Caco-2 (cell line): ENCODE measurements at regions of chr7 and their contacts with region 1.

Region 1: DNA sequence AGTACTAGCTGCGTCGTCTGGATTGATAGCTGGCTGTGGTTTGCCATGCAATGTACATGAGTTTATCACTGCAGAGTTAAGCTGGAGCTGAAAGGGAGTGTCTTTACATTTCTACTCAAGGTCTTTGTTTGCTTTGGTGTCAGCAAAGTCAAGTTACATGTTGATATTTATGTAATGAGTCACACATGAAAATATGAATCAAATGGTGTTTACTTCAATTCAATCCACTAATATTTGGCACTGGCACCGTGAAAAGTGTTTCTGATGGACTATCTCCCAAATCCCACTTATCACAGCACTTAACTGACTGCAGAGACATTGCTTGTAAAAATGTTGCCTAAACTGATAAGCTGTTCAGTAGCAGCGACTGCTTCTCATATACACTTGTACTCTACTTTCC is 395.9 kb downstream of the TFEC start:
- DNase-seq: peak; percentile 23 to 40
- H3K4me3 ChIP-seq: no peak overlapping the region
- H3K4me3 Mint-ChIP-seq: peak overlapping the region; percentile 5
- H3K27ac Mint-ChIP-seq: no peak overlapping the region
- H3K4me1 ChIP-seq: peaks cover 26% of the 10 kb centered on the region
- H3K4me1 Mint-ChIP-seq: peaks cover 27% of the 10 kb centered on the region
- H3K27me3 ChIP-seq: no peaks in the 10 kb centered on the region
- H3K27me3 Mint-ChIP-seq: no peaks in the 10 kb centered on the region
- CTCF ChIP-seq: no peak

Region 2: DNA sequence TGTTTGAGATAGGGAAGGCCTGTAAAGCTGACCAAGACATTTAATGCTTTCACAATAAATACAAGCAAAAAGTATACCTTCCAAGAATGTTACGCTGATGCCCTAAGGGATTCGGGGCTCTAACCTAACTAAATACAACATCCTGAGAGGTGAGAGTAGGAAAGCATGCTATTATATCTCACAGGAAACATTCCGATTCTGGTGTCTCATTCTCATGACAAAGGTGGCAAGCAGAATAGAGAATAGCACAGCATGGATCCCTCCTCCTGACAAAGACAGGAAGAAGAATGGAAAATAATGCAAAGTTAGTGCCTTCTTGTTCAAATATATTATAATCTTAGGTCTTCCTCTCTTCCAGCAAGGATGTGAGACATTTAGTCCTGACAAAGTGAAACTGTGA is 108.4 kb before region 1 on chr7:
- CTCF ChIA-PET with region 1: no interaction called
- POLR2A ChIA-PET with region 1: no interaction called
- intact Hi-C with region 1: no loop called
- DNase-seq: no peak
- H3K4me3 ChIP-seq: no peak overlapping the region
- H3K4me3 Mint-ChIP-seq: no peak overlapping the region
- H3K27ac Mint-ChIP-seq: no peak overlapping the region
- H3K4me1 ChIP-seq: no peaks in the 10 kb centered on the region
- H3K4me1 Mint-ChIP-seq: no peaks in the 10 kb centered on the region
- H3K27me3 ChIP-seq: no peaks in the 10 kb centered on the region; the same call in 1 of the 2 replicates
- H3K27me3 Mint-ChIP-seq: peaks cover 2% of the 10 kb centered on the region
- CTCF ChIP-seq: no peak

Region 3: DNA sequence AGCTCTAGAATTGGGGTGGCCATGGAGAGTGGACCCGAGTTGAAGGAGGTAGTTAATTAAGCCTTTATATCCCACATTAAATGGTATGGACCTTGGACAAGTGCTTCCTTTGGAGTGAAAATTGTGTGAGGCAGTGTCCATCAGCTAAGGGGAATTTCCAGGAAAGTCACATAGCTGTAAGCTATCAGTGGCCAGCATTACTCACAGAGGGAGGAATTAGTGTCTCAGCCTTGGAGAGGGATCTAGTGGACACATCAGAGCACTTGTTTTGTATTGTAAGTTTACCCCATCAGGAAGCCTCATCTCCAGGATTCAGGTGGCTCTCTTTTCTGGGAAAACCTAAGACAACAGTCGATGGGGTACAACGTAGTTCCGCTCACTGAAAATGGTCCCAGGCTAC is 20.8 kb before region 1 on chr7:
- CTCF ChIA-PET with region 1: no interaction called
- POLR2A ChIA-PET with region 1: no interaction called
- intact Hi-C with region 1: loop called (anchors 2 kb)
- DNase-seq: no peak
- H3K4me3 ChIP-seq: no peak overlapping the region
- H3K4me3 Mint-ChIP-seq: no peak overlapping the region
- H3K27ac Mint-ChIP-seq: no peak overlapping the region
- H3K4me1 ChIP-seq: no peaks in the 10 kb centered on the region
- H3K4me1 Mint-ChIP-seq: peaks cover 7% of the 10 kb centered on the region
- H3K27me3 ChIP-seq: no peaks in the 10 kb centered on the region
- H3K27me3 Mint-ChIP-seq: no peaks in the 10 kb centered on the region
- CTCF ChIP-seq: no peak

Region 4: DNA sequence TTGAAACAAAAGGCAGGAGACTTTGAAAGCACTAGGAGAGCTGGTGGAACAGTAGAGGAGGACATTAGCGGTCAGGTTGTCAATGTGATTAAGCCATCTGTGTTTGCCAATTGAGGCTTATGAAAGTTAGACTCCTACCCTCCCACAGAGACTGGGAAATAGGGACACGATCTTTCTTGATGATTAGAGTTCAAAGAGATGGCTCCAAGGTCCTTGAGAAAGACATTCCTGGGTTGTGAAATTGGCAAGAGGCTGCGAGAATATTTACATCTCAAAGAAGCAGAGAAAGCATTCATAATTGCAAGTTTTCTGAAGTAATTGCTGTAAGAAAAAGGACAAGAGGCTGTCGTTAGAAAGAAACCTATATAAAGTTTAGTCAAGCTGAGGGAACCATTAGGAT is 14.6 kb before region 1 on chr7:
- CTCF ChIA-PET with region 1: interaction called, 3 read pairs
- POLR2A ChIA-PET with region 1: no interaction called
- intact Hi-C with region 1: loop called (anchors 1 kb)
- DNase-seq: peak in 1 of 2 experiments; percentile 11
- H3K4me3 ChIP-seq: no peak overlapping the region
- H3K4me3 Mint-ChIP-seq: no peak overlapping the region
- H3K27ac Mint-ChIP-seq: no peak overlapping the region
- H3K4me1 ChIP-seq: peaks cover 24% of the 10 kb centered on the region
- H3K4me1 Mint-ChIP-seq: peaks cover 19% of the 10 kb centered on the region
- H3K27me3 ChIP-seq: no peaks in the 10 kb centered on the region
- H3K27me3 Mint-ChIP-seq: no peaks in the 10 kb centered on the region
- CTCF ChIP-seq: no peak

Region 5: DNA sequence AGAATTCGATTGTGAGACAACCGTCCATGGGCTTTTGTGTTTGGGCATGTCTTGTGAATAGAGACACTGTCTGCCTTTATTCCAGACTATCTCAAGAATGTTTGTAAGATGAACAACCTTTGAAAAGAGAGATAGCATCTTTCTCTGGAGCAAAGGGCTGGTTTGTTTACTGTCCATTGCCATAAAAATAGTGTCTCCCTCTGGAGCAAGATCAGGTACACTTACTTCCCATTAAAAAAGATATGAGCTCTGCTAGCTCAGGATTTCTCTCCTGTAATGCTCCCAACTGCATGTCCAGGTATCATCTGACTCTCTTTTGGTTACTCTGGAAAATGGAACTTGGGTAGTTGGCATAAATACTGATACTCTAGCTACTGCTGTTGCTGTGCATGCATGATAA is 14.8 kb after region 1 on chr7:
- CTCF ChIA-PET with region 1: no interaction called
- POLR2A ChIA-PET with region 1: no interaction called
- intact Hi-C with region 1: loop called (anchors 1 kb)
- DNase-seq: peak in 1 of 2 experiments; percentile 40
- H3K4me3 ChIP-seq: no peak overlapping the region
- H3K4me3 Mint-ChIP-seq: peak overlapping the region; percentile 35
- H3K27ac Mint-ChIP-seq: peak overlapping the region; percentile 53
- H3K4me1 ChIP-seq: peaks cover 38% of the 10 kb centered on the region
- H3K4me1 Mint-ChIP-seq: peaks cover 20% of the 10 kb centered on the region
- H3K27me3 ChIP-seq: no peaks in the 10 kb centered on the region
- H3K27me3 Mint-ChIP-seq: no peaks in the 10 kb centered on the region
- CTCF ChIP-seq: no peak

Region 6: GRCh38 chr7:115654384-115655214 is 20.0 kb after region 1 on chr7:
- CTCF ChIA-PET with region 1: interaction called, 9 read pairs
- POLR2A ChIA-PET with region 1: no interaction called
- intact Hi-C with region 1: loop called (anchors 1 kb)
- DNase-seq: peak in 1 of 2 experiments; percentile 18
- H3K4me3 ChIP-seq: no peak overlapping the region
- H3K4me3 Mint-ChIP-seq: peak overlapping the region; percentile 15
- H3K27ac Mint-ChIP-seq: peak overlapping the region; percentile 67
- H3K4me1 ChIP-seq: peaks cover 43% of the 10 kb centered on the region
- H3K4me1 Mint-ChIP-seq: peaks cover 23% of the 10 kb centered on the region
- H3K27me3 ChIP-seq: no peaks in the 10 kb centered on the region
- H3K27me3 Mint-ChIP-seq: no peaks in the 10 kb centered on the region
- CTCF ChIP-seq: no peak

Region 7: DNA sequence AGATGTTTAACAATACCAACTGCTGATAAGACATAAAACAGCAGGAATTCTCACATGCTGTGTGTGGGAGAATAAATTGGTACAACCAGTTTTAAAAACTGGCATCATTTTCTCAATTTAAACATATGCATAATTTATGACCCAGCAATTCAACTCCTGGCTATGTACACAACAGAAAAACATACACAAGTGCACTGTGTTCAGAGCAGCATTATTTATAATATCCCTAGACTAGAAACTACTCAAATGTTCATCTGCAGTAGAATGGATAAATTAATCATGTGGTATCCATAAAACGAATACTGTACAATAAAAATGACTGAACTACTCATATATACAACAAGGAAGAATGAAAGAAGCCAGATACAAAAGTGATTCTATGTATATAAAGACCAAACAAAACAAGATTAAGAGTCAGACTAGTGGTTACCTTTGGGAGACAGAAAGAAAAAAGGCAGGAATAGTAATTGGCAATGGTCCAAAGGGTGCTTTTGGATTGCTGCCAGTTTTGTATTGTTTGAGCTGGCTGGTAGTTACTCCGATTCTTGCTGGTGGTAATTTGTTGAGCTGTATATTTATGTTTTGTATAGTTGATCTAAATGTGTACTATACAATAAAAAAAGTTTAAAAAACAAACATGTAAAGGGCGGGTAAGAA is 89.9 kb after region 1 on chr7:
- CTCF ChIA-PET with region 1: no interaction called
- POLR2A ChIA-PET with region 1: no interaction called
- intact Hi-C with region 1: no loop called
- DNase-seq: no peak
- H3K4me3 ChIP-seq: no peak overlapping the region
- H3K4me3 Mint-ChIP-seq: no peak overlapping the region
- H3K27ac Mint-ChIP-seq: no peak overlapping the region
- H3K4me1 ChIP-seq: no peaks in the 10 kb centered on the region
- H3K4me1 Mint-ChIP-seq: no peaks in the 10 kb centered on the region
- H3K27me3 ChIP-seq: no peaks in the 10 kb centered on the region
- H3K27me3 Mint-ChIP-seq: peaks cover 8% of the 10 kb centered on the region
- CTCF ChIP-seq: no peak